Activated CD4-positive, alpha-beta memory T cell treated with anti-CD3 and anti-CD28 coated beads, Interleukin-2, amount 10 ng/mL, durations not matched to agents 7 days and 5 days (primary cell): ENCODE measurements at regions of chr20 and their contacts with region 1.

Region 1: GRCh38 chr20:10467681-10468339 is 32.7 kb downstream of the SLX4IP start:
- DNase-seq: no peak
- H3K4me3 Mint-ChIP-seq: no peak overlapping the region
- H3K27ac Mint-ChIP-seq: no peak overlapping the region
- H3K4me1 Mint-ChIP-seq: peaks cover 12% of the 10 kb centered on the region
- H3K27me3 Mint-ChIP-seq: no peaks in the 10 kb centered on the region

Region 2: GRCh38 chr20:10536531-10536930 is 68.7 kb after region 1 on chr20:
- CTCF ChIA-PET with region 1: interaction called, 12 read pairs
- POLR2A ChIA-PET with region 1: no interaction called
- DNase-seq: peak; percentile 42
- H3K4me3 Mint-ChIP-seq: no peak overlapping the region
- H3K27ac Mint-ChIP-seq: no peak overlapping the region
- H3K4me1 Mint-ChIP-seq: peaks cover 13% of the 10 kb centered on the region
- H3K27me3 Mint-ChIP-seq: no peaks in the 10 kb centered on the region